ENCODE measurements at regions of chr20 and their contacts with region 1.

Region 1: GRCh38 chr20:57622579-57623377 is 2.6 kb upstream of the ZBP1 start:
- DNase-seq: peak; percentile 52 to 80 (median 76)
- ATAC-seq: peak; percentile 34
- H3K4me3 ChIP-seq: no peak overlapping the region
- H3K4me3 Mint-ChIP-seq: peak overlapping the region; percentile 57
- H3K27ac ChIP-seq: no peak overlapping the region
- H3K27ac Mint-ChIP-seq: peak overlapping the region; percentile 84
- H3K4me1 ChIP-seq: peaks cover 73% of the 10 kb centered on the region
- H3K4me1 Mint-ChIP-seq: peaks cover 78% of the 10 kb centered on the region
- H3K27me3 ChIP-seq: no peaks in the 10 kb centered on the region
- H3K27me3 Mint-ChIP-seq: no peaks in the 10 kb centered on the region
- CTCF ChIP-seq: peak; percentile 72

Region 2: DNA sequence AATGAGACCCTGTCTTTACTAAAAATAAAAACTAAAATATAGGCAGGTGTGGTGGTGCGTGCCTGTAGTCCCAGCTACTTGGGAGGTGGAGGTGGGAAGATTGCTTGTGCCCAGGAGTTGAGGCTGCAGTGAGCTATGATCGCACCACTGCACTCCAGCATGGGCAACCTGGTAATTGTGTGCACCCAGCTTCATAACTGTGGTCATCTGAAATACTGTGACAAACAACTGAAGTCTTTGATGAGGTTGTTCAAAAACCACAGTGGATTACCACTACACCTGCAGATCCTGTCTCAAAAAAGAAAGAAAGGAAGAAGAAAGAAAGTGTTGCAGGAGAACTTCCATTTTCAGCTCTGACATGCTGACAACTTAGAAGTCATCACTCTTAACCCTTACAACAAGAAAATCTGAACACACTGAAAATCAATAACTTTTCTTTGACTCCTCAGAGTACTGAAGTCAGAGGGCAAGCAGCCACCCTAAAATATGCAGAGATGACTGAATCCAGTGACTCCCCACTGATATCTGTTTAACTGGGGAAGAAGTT is 11.2 kb after region 1 on chr20:
- CTCF ChIA-PET with region 1: interaction called, 24 read pairs
- POLR2A ChIA-PET with region 1: interaction called, 82 read pairs
- intact Hi-C with region 1: loop called in 1 of 2 experiments (anchors 2 kb)
- DNase-seq: peak in 4 of 9 experiments; percentile 25 to 72 (median 56)
- ATAC-seq: peak; percentile 56
- H3K4me3 ChIP-seq: no peak overlapping the region
- H3K4me3 Mint-ChIP-seq: peak overlapping the region; percentile 4
- H3K27ac ChIP-seq: no peak overlapping the region
- H3K27ac Mint-ChIP-seq: peak overlapping the region; percentile 25
- H3K4me1 ChIP-seq: peaks cover 39% of the 10 kb centered on the region
- H3K4me1 Mint-ChIP-seq: peaks cover 54% of the 10 kb centered on the region
- H3K27me3 ChIP-seq: no peaks in the 10 kb centered on the region
- H3K27me3 Mint-ChIP-seq: no peaks in the 10 kb centered on the region
- CTCF ChIP-seq: no peak

Region 3: DNA sequence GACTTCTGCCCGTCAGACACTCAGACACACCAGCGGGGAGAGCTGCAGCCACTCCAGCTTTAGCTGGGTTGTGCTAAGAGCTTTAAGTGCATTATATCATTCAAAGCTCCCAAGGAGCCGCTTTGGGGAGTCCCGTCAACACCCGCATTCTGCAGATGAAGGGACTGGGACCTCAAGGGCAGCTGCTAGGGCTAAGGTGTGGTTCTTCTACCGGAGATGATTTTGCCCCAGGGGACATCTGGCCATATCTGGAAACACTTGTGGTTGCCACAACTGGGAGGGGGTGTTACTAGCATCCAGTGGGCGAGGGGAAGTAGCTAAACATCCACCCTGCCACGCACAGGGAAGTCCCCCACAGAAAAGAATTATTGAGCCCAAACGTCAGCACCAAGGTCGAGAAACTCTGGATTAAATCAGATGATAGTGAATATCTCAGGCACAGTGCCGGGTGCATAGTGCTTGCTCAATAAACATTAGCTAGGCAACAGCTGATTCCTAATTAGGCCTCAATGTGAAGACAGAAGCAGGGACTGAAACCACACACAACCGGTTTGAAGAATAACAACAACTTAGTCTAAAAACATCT is 57.4 kb after region 1 on chr20:
- CTCF ChIA-PET with region 1: interaction called, 61 read pairs
- POLR2A ChIA-PET with region 1: no interaction called
- intact Hi-C with region 1: loop called (anchors 1 kb)
- DNase-seq: peak in 3 of 9 experiments; percentile 25 to 60 (median 38)
- ATAC-seq: peak; percentile 11
- H3K4me3 ChIP-seq: no peak overlapping the region
- H3K4me3 Mint-ChIP-seq: no peak overlapping the region
- H3K27ac ChIP-seq: no peak overlapping the region
- H3K27ac Mint-ChIP-seq: peak overlapping the region; percentile 25
- H3K4me1 ChIP-seq: peaks cover 23% of the 10 kb centered on the region
- H3K4me1 Mint-ChIP-seq: peaks cover 39% of the 10 kb centered on the region
- H3K27me3 ChIP-seq: no peaks in the 10 kb centered on the region
- H3K27me3 Mint-ChIP-seq: peaks cover 2% of the 10 kb centered on the region
- CTCF ChIP-seq: no peak

Region 4: DNA sequence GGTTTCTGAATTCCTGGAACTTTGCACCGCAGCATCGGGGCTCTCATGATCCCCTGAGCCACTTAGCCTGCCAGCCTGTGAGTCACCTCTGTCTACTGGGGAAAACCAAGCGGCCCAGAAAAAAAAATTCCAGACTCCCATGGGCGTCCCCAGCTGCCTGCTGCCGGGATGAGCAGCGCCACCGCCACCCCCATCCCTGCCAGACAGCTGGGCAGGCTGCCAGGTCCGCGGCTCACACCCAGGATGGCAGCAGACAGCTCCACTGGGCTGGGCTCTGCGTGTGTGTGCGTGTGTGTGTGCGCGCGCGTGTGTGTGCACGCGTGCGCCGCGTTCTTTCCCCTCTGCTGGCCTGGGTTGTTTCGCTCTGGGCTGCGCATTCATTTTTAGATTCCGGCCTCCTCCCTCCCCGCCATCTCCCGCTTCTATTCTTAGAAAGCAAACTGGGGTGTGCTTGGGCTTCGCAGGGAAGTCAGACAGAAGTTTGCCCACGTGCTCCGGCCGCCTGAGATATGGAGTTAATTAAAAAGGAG is 125.9 kb after region 1 on chr20:
- CTCF ChIA-PET with region 1: no interaction called
- POLR2A ChIA-PET with region 1: no interaction called
- intact Hi-C with region 1: no loop called
- DNase-seq: peak; percentile 4 to 74 (median 51)
- ATAC-seq: peak; percentile 87
- H3K4me3 ChIP-seq: peak overlapping the region in 1 of 2 experiments; percentile 39
- H3K4me3 Mint-ChIP-seq: peak overlapping the region; percentile 82
- H3K27ac ChIP-seq: no peak overlapping the region
- H3K27ac Mint-ChIP-seq: peak overlapping the region; percentile 32
- H3K4me1 ChIP-seq: no peaks in the 10 kb centered on the region
- H3K4me1 Mint-ChIP-seq: peaks cover 9% of the 10 kb centered on the region
- H3K27me3 ChIP-seq: no peaks in the 10 kb centered on the region
- H3K27me3 Mint-ChIP-seq: peaks cover 18% of the 10 kb centered on the region
- CTCF ChIP-seq: no peak

Region 5: DNA sequence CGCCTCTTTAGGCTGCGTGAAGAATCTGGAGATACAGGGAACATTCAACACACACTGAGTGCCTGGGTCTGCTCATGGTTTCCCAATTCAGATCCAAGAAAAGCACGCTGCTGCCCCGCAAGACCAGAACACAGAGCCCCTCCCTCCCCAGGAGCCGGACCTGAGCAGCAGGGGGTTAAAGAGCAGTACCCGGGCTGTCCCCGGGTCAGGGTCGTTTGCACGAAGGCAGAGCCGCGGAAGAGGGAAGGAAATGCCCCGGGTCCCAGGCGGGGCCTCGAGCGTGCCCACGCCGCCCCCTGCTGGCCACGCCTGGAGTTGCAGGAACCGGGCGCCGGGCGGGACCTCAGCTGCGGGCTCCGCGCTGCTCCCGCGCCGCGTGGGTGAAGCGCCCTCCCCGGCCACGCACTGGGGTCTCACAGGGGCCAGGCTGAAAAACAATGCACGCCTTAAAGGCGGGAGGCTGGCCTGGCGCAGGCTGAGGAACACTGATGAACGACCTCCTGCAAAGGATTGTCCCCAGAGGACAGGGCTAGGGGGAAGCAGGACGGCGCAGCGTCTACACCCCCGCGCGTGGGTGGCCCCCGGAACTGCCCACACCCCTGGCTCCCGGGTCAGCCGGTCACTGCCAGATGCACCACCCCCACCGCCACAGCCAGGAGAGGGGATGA is 556.8 kb after region 1 on chr20:
- CTCF ChIA-PET with region 1: interaction called, 4 read pairs
- POLR2A ChIA-PET with region 1: no interaction called
- intact Hi-C with region 1: loop called in 1 of 2 experiments (anchors 1 kb)
- DNase-seq: peak; percentile 52 to 83 (median 66)
- ATAC-seq: peak; percentile 98
- H3K4me3 ChIP-seq: peak overlapping the region; percentile 26 to 48
- H3K4me3 Mint-ChIP-seq: peak overlapping the region; percentile 68
- H3K27ac ChIP-seq: no peak overlapping the region
- H3K27ac Mint-ChIP-seq: no peak overlapping the region
- H3K4me1 ChIP-seq: peaks cover 9% of the 10 kb centered on the region
- H3K4me1 Mint-ChIP-seq: peaks cover 8% of the 10 kb centered on the region
- H3K27me3 ChIP-seq: peaks cover 3 to 6% of the 10 kb centered on the region in 2 experiments
- H3K27me3 Mint-ChIP-seq: peaks cover 24% of the 10 kb centered on the region
- CTCF ChIP-seq: peak; percentile 100

Region 6: GRCh38 chr20:59253779-59254319 is 1631.1 kb after region 1 on chr20:
- CTCF ChIA-PET with region 1: no interaction called
- POLR2A ChIA-PET with region 1: no interaction called
- intact Hi-C with region 1: loop called in 1 of 2 experiments (anchors 10 kb)
- DNase-seq: peak in 7 of 9 experiments; percentile 26 to 70 (median 40)
- ATAC-seq: peak; percentile 61
- H3K4me3 ChIP-seq: peak overlapping the region in 1 of 2 experiments; percentile 18
- H3K4me3 Mint-ChIP-seq: peak overlapping the region; percentile 75
- H3K27ac ChIP-seq: peak overlapping the region; percentile 57 to 59
- H3K27ac Mint-ChIP-seq: peak overlapping the region; percentile 98
- H3K4me1 ChIP-seq: peaks cover 53% of the 10 kb centered on the region
- H3K4me1 Mint-ChIP-seq: peaks cover 74% of the 10 kb centered on the region
- H3K27me3 ChIP-seq: no peaks in the 10 kb centered on the region
- H3K27me3 Mint-ChIP-seq: no peaks in the 10 kb centered on the region
- CTCF ChIP-seq: no peak